Heart left ventricle (tissue), 16 donors: ENCODE measurements at regions of chr3 and their contacts with region 1.

Region 1: GRCh38 chr3:138186803-138187295 is 252 bp upstream of the ARMC8 start:
- DNase-seq: peak; percentile 88 to 94 (median 92)
- ATAC-seq: peak; percentile 95 to 99 (median 97)
- H3K4me3 ChIP-seq: peak overlapping the region; percentile 62 to 96 (median 78)
- H3K27ac ChIP-seq: peak overlapping the region; percentile 83 to 99 (median 93)
- H3K4me1 ChIP-seq: peaks cover 0 to 35% (median 24%) of the 10 kb centered on the region in 12 donors
- H3K27me3 ChIP-seq: peaks cover 0 to 7% (median 0%) of the 10 kb centered on the region in 9 donors
- CTCF ChIP-seq: no peak
- POLR2A ChIP-seq: no peak

Region 2: GRCh38 chr3:137778941-137779340 is 407.9 kb before region 1 on chr3:
- intact Hi-C with region 1: no loop called
- DNase-seq: no peak
- ATAC-seq: no peak
- H3K4me3 ChIP-seq: no peak overlapping the region
- H3K27ac ChIP-seq: no peak overlapping the region
- H3K4me1 ChIP-seq: no peaks in the 10 kb centered on the region
- H3K27me3 ChIP-seq: peaks cover 0 to 56% (median 17%) of the 10 kb centered on the region in 9 donors
- CTCF ChIP-seq: no peak
- POLR2A ChIP-seq: no peak

Region 3: GRCh38 chr3:138174421-138175122 is 12.3 kb before region 1 on chr3 and contains the start of gene DBR1:
- intact Hi-C with region 1: loop called in 1 of 10 experiments (anchors 1 kb)
- DNase-seq: peak; percentile 75 to 86 (median 85)
- ATAC-seq: peak; percentile 80 to 96 (median 96)
- H3K4me3 ChIP-seq: peak within 1 kb of the TSS; percentile 54 to 99 (median 88)
- H3K27ac ChIP-seq: peak within 1 kb of the TSS; percentile 67 to 90 (median 80)
- H3K4me1 ChIP-seq: peaks cover 0 to 33% (median 18%) of the 10 kb centered on the region in 12 donors
- H3K27me3 ChIP-seq: no peaks in the 10 kb centered on the region
- CTCF ChIP-seq: no peak
- POLR2A ChIP-seq: peak in 1 of 2 donors; percentile 79
- total RNA-seq, gene DBR1: 6.2 to 11.0 (median 7.9) TPM

Region 4: DNA sequence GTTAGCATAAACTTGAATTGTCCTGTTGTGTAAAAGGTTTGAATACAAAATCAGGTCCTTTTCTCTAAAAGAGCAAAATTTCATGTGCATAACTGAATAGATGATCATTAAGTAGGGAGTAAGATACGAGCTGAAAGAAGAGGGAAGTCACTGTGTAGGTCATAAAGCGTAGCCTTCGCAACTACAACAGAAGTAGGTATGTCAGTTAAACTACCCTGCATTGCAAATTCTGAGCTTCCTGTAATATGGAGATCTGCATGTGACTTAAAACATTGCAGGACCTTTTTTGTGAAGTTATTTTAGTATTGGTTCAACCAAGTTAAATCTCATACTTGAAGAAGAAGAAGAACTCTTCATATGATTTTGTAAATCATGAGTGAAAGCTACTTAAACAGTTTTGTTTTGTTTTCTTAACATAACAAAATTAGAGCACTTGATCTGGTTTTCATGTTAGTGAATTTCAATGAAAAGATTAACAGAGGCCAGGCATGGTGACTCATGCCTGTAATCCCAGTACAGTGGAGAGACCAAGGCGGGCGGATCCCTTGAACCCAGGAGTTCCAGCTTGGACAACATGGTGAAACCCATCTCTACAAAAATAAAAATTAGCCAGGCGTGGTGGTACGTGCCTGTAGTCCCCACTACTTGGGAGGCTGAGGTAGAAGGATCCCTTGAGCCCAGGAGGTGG is 26.7 kb after region 1 on chr3:
- intact Hi-C with region 1: loop called in 1 of 10 experiments (anchors 2 kb)
- DNase-seq: no peak
- ATAC-seq: no peak
- H3K4me3 ChIP-seq: no peak overlapping the region
- H3K27ac ChIP-seq: no peak overlapping the region
- H3K4me1 ChIP-seq: peaks cover 0 to 11% (median 2%) of the 10 kb centered on the region in 12 donors
- H3K27me3 ChIP-seq: no peaks in the 10 kb centered on the region
- CTCF ChIP-seq: no peak
- POLR2A ChIP-seq: no peak

Region 5: DNA sequence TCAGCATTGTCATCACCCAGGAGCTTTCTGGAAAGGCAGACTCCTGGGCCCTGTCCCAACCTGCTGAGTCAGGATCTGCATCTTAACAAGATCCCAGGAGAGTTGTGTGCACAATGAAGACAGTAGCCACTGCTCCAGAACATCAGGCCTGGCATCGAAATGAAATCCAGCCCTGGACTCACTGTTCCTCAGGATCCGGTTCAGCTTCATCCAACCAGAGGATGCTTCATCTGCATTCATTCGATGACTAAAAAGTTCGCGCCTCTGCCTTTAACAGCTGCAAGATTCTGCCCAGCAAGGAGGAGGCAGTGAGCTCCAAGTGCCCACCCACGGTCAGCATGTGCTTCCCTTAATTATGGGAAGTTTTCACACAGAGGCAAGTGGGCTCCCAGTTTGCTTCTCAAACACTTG is 221.9 kb after region 1 on chr3:
- intact Hi-C with region 1: no loop called
- DNase-seq: no peak
- ATAC-seq: peak in 3 of 4 donors; percentile 8 to 25 (median 22)
- H3K4me3 ChIP-seq: no peak overlapping the region
- H3K27ac ChIP-seq: no peak overlapping the region
- H3K4me1 ChIP-seq: peaks cover 0 to 20% (median 4%) of the 10 kb centered on the region in 12 donors
- H3K27me3 ChIP-seq: no peaks in the 10 kb centered on the region
- CTCF ChIP-seq: no peak
- POLR2A ChIP-seq: no peak